ENCODE measurements at regions of chr4 and their contacts with region 1.

Region 1: GRCh38 chr4:55982976-55983375 is 34.2 kb downstream of the CEP135 start:
- DNase-seq: no peak
- ATAC-seq: no peak
- H3K4me3 ChIP-seq: no peak overlapping the region
- H3K4me3 Mint-ChIP-seq: no peak overlapping the region
- H3K27ac ChIP-seq: no peak overlapping the region
- H3K27ac Mint-ChIP-seq: no peak overlapping the region
- H3K4me1 ChIP-seq: no peaks in the 10 kb centered on the region
- H3K4me1 Mint-ChIP-seq: peaks cover 0 to 3% (median 0%) of the 10 kb centered on the region in 7 donors
- H3K27me3 ChIP-seq: no peaks in the 10 kb centered on the region
- H3K27me3 Mint-ChIP-seq: no peaks in the 10 kb centered on the region

Region 2: DNA sequence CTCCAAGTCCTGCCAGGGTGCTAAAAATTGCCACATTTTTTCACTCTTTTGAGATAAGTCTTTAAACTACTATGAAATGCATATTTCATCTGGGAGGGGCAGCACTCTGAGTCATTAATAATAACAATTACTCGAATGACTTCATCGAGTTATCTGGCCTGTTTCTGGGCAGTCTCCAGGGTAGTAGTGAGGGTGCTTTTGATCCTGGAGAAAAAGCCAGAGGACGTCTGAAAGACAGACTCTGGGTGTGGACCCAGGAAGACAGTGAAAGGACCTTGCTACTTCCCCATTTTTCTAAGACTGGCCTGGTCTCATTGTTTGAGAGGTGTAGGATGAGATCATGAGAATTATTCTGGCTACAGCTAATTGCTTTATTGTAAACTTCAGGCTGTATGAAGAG is 679.2 kb before region 1 on chr4:
- CTCF ChIA-PET with region 1: no interaction called
- POLR2A ChIA-PET with region 1: no interaction called
- intact Hi-C with region 1: no loop called
- DNase-seq: no peak
- ATAC-seq: no peak
- H3K4me3 ChIP-seq: no peak overlapping the region
- H3K4me3 Mint-ChIP-seq: no peak overlapping the region
- H3K27ac ChIP-seq: no peak overlapping the region
- H3K27ac Mint-ChIP-seq: no peak overlapping the region
- H3K4me1 ChIP-seq: no peaks in the 10 kb centered on the region
- H3K4me1 Mint-ChIP-seq: no peaks in the 10 kb centered on the region
- H3K27me3 ChIP-seq: no peaks in the 10 kb centered on the region
- H3K27me3 Mint-ChIP-seq: peaks cover 0 to 14% (median 4%) of the 10 kb centered on the region in 5 donors

Region 3: GRCh38 chr4:55819634-55820033 is 163.3 kb before region 1 on chr4 and contains the start of gene EXOC1L:
- CTCF ChIA-PET with region 1: no interaction called
- POLR2A ChIA-PET with region 1: no interaction called
- intact Hi-C with region 1: no loop called
- DNase-seq: peak in 2 of 9 donors; percentile 1 to 3
- ATAC-seq: no peak
- H3K4me3 ChIP-seq: no peak within 1 kb of the TSS
- H3K4me3 Mint-ChIP-seq: peak within 1 kb of the TSS in 9 of 10 donors; percentile 39 to 77 (median 62)
- H3K27ac ChIP-seq: no peak within 1 kb of the TSS
- H3K27ac Mint-ChIP-seq: peak within 1 kb of the TSS in 1 of 9 donors; percentile 8
- H3K4me1 ChIP-seq: no peaks in the 10 kb centered on the region
- H3K4me1 Mint-ChIP-seq: peaks cover 2 to 9% (median 8%) of the 10 kb centered on the region in 7 donors
- H3K27me3 ChIP-seq: no peaks in the 10 kb centered on the region
- H3K27me3 Mint-ChIP-seq: peaks cover 12 to 29% (median 18%) of the 10 kb centered on the region in 5 donors
- total RNA-seq, gene EXOC1L: not detected

Region 4: DNA sequence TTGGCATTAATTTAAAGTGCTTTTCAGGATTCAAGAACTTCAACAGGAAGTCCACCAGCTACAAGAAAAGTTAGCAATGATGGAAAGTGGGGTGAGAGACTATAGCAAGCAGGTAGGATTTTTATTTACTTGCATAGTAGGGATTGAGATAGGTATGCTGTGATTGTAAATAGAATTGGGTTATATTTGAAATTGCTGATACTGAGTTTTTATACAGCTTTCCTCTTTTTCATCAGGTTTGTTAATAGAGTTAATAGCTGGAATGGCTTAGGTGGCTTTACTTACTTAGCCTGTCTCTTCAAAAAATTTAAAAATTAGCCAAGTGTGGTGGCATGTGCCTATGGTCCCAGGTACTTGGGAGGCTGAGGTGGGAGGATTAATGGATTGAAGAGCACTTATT is 23.3 kb before region 1 on chr4:
- CTCF ChIA-PET with region 1: interaction called, 10 read pairs
- POLR2A ChIA-PET with region 1: no interaction called
- intact Hi-C with region 1: no loop called
- DNase-seq: no peak
- ATAC-seq: no peak
- H3K4me3 ChIP-seq: no peak overlapping the region
- H3K4me3 Mint-ChIP-seq: no peak overlapping the region
- H3K27ac ChIP-seq: no peak overlapping the region
- H3K27ac Mint-ChIP-seq: no peak overlapping the region
- H3K4me1 ChIP-seq: no peaks in the 10 kb centered on the region
- H3K4me1 Mint-ChIP-seq: peaks cover 0 to 22% (median 4%) of the 10 kb centered on the region in 7 donors
- H3K27me3 ChIP-seq: no peaks in the 10 kb centered on the region
- H3K27me3 Mint-ChIP-seq: no peaks in the 10 kb centered on the region

Measured in naive thymus-derived CD4-positive, alpha-beta T cell (primary cell).